ENCODE measurements at regions of chr2 and their contacts with region 1.

Region 1: GRCh38 chr2:69926849-69927515 is 12.1 kb downstream of the MXD1 start:
- DNase-seq: no peak
- ATAC-seq: no peak
- H3K4me3 ChIP-seq: no peak overlapping the region
- H3K27ac ChIP-seq: no peak overlapping the region
- H3K4me1 ChIP-seq: no peaks in the 10 kb centered on the region
- H3K27me3 ChIP-seq: no peaks in the 10 kb centered on the region
- CTCF ChIP-seq: no peak
- POLR2A ChIP-seq: no peak

Region 2: DNA sequence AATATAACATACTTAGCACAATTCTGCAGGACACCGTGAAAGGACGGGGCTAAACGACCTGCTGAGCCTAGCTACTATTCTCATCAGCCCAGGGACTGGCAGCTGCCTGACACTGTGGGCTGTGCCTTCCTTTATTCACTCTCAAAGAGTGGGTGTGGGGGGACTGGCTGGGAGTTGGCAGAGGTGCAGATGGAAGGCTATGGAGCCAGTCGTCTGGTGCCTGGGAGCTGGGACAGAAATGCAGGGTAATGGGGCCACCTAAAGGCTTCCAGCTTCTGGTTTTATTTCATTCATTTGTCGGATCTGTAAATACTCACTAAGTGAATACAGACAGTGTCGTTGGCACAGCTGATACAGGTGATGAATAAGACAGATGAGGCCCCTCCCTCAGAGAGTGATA is 433.7 kb before region 1 on chr2:
- intact Hi-C with region 1: no loop called
- DNase-seq: peak in 2 of 4 donors; percentile 13 to 20
- ATAC-seq: no peak
- H3K4me3 ChIP-seq: no peak overlapping the region
- H3K27ac ChIP-seq: no peak overlapping the region
- H3K4me1 ChIP-seq: no peaks in the 10 kb centered on the region
- H3K27me3 ChIP-seq: no peaks in the 10 kb centered on the region
- CTCF ChIP-seq: no peak
- POLR2A ChIP-seq: no peak

Region 3: GRCh38 chr2:70069049-70069448 is 142.1 kb after region 1 on chr2:
- intact Hi-C with region 1: loop called (anchors 10 kb)
- DNase-seq: peak in 2 of 4 donors; percentile 16 to 60
- ATAC-seq: peak; percentile 36
- H3K4me3 ChIP-seq: no peak overlapping the region
- H3K27ac ChIP-seq: peak overlapping the region in 3 of 4 donors; percentile 13 to 77 (median 43)
- H3K4me1 ChIP-seq: peaks cover 15% of the 10 kb centered on the region
- H3K27me3 ChIP-seq: no peaks in the 10 kb centered on the region
- CTCF ChIP-seq: no peak
- POLR2A ChIP-seq: no peak